ENCODE measurements at regions of chr7 and their contacts with region 1.

Region 1: DNA sequence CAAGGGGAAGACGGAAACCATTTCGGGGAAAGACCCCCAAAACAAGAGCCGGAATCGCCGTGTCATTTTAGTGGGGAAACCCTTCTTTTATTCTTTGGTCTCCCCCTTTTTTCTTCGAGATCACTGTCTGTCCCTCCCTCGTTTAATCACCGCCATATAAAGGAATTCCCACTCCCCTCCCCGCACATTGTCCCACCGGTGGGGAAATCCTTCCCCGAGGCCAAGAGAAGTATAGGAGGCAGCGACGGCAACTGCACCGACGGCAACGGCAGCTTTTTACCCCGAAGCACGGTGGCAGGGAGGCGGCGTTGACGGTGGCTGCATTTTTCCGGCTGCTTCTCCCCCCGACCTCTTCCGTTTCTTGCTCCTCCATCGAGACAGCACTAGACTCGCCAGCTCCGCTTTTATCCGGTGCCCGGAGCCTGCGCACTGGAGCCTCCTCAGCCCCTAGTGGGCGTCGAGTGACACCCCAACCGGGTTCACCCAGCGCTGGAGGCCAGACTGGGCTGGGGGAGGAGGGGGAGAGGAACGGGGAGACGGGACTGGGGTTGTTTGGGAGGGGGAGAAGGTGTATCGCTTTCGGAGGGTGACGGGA is 687 bp upstream of the KMT2E start:
- DNase-seq: peak; percentile 94
- H3K4me3 ChIP-seq: peak overlapping the region; percentile 97 to 99 (median 98)
- H3K27ac ChIP-seq: peak overlapping the region; percentile 98
- H3K4me1 ChIP-seq: peaks cover 31% of the 10 kb centered on the region
- H3K27me3 ChIP-seq: no peaks in the 10 kb centered on the region
- CTCF ChIP-seq: peak; percentile 56 to 72
- POLR2A ChIP-seq: peak; percentile 21

Region 2: GRCh38 chr7:104943502-104944343 is 69.6 kb before region 1 on chr7:
- CTCF ChIA-PET with region 1: interaction called, 6 read pairs
- POLR2A ChIA-PET with region 1: interaction called, 6 read pairs
- dilution Hi-C with region 1: no loop called
- intact Hi-C with region 1: loop called (anchors 1 kb)
- DNase-seq: peak; percentile 100
- H3K4me3 ChIP-seq: no peak overlapping the region
- H3K27ac ChIP-seq: peak overlapping the region; percentile 86
- H3K4me1 ChIP-seq: peaks cover 35% of the 10 kb centered on the region
- H3K27me3 ChIP-seq: no peaks in the 10 kb centered on the region
- CTCF ChIP-seq: no peak
- POLR2A ChIP-seq: no peak

Region 3: GRCh38 chr7:105046414-105046813 is 33.1 kb after region 1 on chr7:
- CTCF ChIA-PET with region 1: interaction called, 4 read pairs
- POLR2A ChIA-PET with region 1: no interaction called
- dilution Hi-C with region 1: no loop called
- intact Hi-C with region 1: loop called (anchors 1 kb)
- DNase-seq: no peak
- H3K4me3 ChIP-seq: no peak overlapping the region
- H3K27ac ChIP-seq: no peak overlapping the region
- H3K4me1 ChIP-seq: no peaks in the 10 kb centered on the region
- H3K27me3 ChIP-seq: no peaks in the 10 kb centered on the region
- CTCF ChIP-seq: no peak
- POLR2A ChIP-seq: no peak

Region 4: GRCh38 chr7:105098863-105099515 is 85.7 kb after region 1 on chr7:
- CTCF ChIA-PET with region 1: interaction called, 5 read pairs
- POLR2A ChIA-PET with region 1: no interaction called
- dilution Hi-C with region 1: no loop called
- intact Hi-C with region 1: loop called (anchors 5 kb)
- DNase-seq: peak; percentile 38
- H3K4me3 ChIP-seq: no peak overlapping the region
- H3K27ac ChIP-seq: peak overlapping the region; percentile 60
- H3K4me1 ChIP-seq: peaks cover 24% of the 10 kb centered on the region
- H3K27me3 ChIP-seq: no peaks in the 10 kb centered on the region
- CTCF ChIP-seq: no peak
- POLR2A ChIP-seq: no peak

Region 5: DNA sequence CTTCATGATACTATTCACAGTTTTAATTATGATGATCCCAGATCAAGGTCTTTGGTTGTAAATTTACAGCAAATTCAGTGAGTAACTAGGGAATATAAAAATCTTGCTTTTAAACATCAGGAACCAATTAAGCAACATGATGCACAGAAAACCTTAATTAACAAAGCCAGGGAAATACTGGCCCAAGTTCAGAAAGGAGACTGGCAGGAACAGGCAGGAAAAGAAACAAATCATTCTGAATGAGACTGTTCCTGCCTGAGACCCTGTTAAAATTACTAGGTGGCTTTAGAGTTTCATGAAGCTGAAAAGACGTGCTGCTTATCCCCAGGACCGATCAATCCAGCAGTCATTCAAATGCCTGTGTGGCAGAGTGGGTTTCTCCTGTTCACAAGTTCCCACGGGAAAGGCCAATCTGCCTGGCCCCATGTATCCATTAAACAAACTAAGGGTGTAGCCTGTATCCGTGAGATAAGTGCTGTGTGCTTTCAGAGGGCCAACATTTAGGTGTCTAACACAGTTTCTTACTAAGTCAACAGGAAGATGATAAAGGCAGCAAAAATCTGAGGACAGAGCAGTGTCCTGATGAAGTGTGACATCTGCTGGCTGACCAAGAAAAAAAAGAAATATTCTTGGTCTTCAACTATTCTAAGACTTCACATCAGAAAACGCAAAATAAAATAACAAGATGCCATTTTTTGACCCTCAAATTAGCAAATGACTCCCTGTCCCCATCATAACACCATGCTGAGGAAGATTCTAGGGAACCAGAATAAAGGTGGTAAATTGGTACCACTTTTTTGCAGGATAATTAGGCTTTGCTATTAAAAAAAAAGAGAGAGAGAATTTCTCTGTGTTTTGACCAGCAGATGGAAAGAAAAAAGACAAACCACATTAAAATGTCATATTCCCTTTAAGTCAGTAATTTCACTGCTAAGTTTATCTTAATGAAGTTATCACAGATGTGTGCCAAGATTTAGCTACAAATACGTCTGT is 474.6 kb after region 1 on chr7:
- CTCF ChIA-PET with region 1: no interaction called
- POLR2A ChIA-PET with region 1: no interaction called
- dilution Hi-C with region 1: no loop called
- intact Hi-C with region 1: loop called (anchors 5 kb)
- DNase-seq: peak; percentile 100
- H3K4me3 ChIP-seq: peak overlapping the region in 1 of 3 experiments; percentile 10
- H3K27ac ChIP-seq: peak overlapping the region; percentile 98
- H3K4me1 ChIP-seq: peaks cover 29% of the 10 kb centered on the region
- H3K27me3 ChIP-seq: no peaks in the 10 kb centered on the region
- CTCF ChIP-seq: peak; percentile 22 to 39
- POLR2A ChIP-seq: peak; percentile 78